ENCODE measurements at regions of chr15 and their contacts with region 1.

Region 1: GRCh38 chr15:50681467-50681866 is 5.1 kb downstream of the TRPM7 start:
- DNase-seq: no peak
- H3K4me3 ChIP-seq: no peak overlapping the region
- CTCF ChIP-seq: no peak
- POLR2A ChIP-seq: no peak

Region 2: GRCh38 chr15:50876989-50877360 is 195.5 kb after region 1 on chr15:
- intact Hi-C with region 1: loop called (anchors 5 kb)
- DNase-seq: peak; percentile 84 to 91
- H3K4me3 ChIP-seq: no peak overlapping the region
- CTCF ChIP-seq: peak in 1 of 3 donors; percentile 95
- POLR2A ChIP-seq: no peak

Measured in lower leg skin (tissue), 4 donors.